ENCODE measurements at regions of chr7 and their contacts with region 1.

Region 1: GRCh38 chr7:127375631-127376030 is 16.9 kb downstream of the ZNF800 start:
- DNase-seq: no peak
- H3K4me3 ChIP-seq: no peak overlapping the region
- H3K27ac ChIP-seq: no peak overlapping the region
- H3K4me1 ChIP-seq: no peaks in the 10 kb centered on the region
- H3K27me3 ChIP-seq: no peaks in the 10 kb centered on the region
- CTCF ChIP-seq: no peak
- POLR2A ChIP-seq: no peak

Region 2: GRCh38 chr7:127347567-127348246 is 27.9 kb before region 1 on chr7:
- intact Hi-C with region 1: loop called (anchors 2 kb)
- DNase-seq: peak in 1 of 2 donors; percentile 54
- H3K4me3 ChIP-seq: peak overlapping the region; percentile 26 to 64 (median 41)
- H3K27ac ChIP-seq: no peak overlapping the region
- H3K4me1 ChIP-seq: no peaks in the 10 kb centered on the region
- H3K27me3 ChIP-seq: no peaks in the 10 kb centered on the region
- CTCF ChIP-seq: peak in 1 of 3 donors; percentile 71
- POLR2A ChIP-seq: no peak

Region 3: GRCh38 chr7:127392566-127393367 is 17.1 kb after region 1 on chr7 and contains the start of gene ZNF800:
- intact Hi-C with region 1: loop called (anchors 1 kb)
- DNase-seq: peak; percentile 87 to 88
- H3K4me3 ChIP-seq: peak within 1 kb of the TSS; percentile 93 to 98 (median 95)
- H3K27ac ChIP-seq: peak within 1 kb of the TSS; percentile 94 to 96
- H3K4me1 ChIP-seq: peaks cover 0 to 4% of the 10 kb centered on the region in 2 donors
- H3K27me3 ChIP-seq: no peaks in the 10 kb centered on the region
- CTCF ChIP-seq: peak in 1 of 3 donors; percentile 16
- POLR2A ChIP-seq: peak; percentile 71
- total RNA-seq, gene ZNF800: 29.5 to 51.1 (median 31.0) TPM

Measured in breast epithelium (tissue), 4 donors.